A549 (cell line): ENCODE measurements at regions of chr9 and their contacts with region 1.

Region 1: DNA sequence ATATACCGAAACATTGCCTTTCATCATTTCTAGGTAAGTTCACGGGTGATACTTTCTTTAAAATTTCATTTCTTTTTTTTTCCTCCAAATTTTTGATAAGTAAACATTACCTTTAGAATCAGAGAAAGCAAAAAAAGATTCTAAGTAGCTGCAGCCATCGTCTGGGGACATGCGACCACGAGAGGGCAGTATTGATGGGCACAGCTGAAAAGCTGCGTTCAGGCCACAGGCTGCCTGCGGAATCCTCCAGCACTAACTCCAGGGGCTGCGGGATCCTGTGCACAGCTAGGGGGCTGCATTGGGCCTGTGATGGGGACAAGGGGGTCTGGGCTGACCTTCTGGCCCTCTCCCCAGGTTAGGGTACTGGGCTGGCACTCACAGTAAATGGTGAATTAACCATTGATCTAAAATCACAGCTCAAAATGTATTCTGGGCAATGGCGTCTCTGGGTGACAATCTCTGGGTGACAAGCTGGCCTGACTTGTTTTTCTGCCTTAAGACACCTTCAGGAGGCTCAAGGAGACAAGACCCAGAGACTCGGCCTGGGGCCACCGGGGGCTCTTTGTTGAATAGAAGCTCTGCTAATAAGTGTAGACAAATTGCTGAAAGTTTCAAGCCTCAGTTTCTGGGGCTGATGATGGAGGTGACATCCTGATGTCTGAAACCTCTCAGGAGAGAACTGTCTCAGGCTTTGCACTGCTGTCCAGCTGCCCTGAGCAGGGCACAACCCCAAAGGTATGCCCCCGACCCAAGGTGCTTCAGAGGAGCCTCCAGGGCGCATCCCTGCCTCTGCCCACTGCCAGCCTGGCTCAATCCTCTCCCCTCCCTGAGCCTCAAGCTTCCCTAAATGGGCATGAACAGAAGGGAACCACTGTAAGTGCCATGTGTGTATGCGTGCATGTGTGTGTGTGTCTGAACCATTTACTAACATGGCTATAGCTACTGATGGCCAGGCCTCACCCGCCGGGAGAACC is 44.3 kb upstream of the SARDH start:
- DNase-seq: peak; percentile 66 to 75
- ATAC-seq: peak; percentile 54 to 86; a peak in 5 of 6 replicates
- H3K4me3 ChIP-seq: no peak overlapping the region
- H3K27ac ChIP-seq: no peak overlapping the region
- H3K4me1 ChIP-seq: no peaks in the 10 kb centered on the region
- CTCF ChIP-seq: peak; percentile 83
- EP300 ChIP-seq: no peak
- POLR2A ChIP-seq: no peak
- RAD21 ChIP-seq: peak; percentile 66 to 70

Region 2: DNA sequence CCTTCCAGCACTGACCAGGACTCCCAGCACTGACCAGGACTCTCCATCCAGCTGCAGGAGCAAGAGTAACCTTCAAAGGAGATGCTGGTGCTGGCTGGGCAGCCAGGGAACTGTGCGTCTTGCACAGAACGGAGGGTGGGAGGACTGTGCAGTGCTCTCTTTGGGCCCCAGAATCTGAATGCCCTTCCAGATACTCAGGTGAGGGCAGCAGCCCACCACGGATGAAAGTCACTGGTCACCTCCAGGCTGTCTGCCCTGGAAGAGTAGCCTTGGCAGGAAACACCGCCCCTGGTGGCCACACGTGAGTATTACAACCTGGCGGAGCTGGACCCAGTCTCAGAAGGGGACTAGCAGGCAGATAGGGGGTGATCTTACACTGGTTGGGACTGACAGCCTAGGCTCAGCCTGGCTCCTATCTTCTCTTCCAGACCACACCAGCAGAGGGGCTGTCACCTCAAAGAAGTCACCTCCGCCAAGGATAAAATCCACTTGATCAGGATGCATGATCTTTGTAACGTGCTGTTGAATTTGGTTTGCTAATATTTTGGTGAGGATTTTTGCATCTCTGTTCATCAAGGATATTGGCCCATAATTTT is 39.5 kb before region 1 on chr9:
- CTCF ChIA-PET with region 1: interaction called, 26 read pairs
- POLR2A ChIA-PET with region 1: no interaction called
- DNase-seq: peak; percentile 78 to 95
- ATAC-seq: peak; percentile 86 to 96
- H3K4me3 ChIP-seq: no peak overlapping the region
- H3K27ac ChIP-seq: no peak overlapping the region
- H3K4me1 ChIP-seq: no peaks in the 10 kb centered on the region; the same call in 2 of the 3 replicates
- CTCF ChIP-seq: peak; percentile 86
- EP300 ChIP-seq: no peak
- POLR2A ChIP-seq: no peak
- RAD21 ChIP-seq: peak; percentile 41 to 59; a peak in 3 of 5 replicates

Region 3: DNA sequence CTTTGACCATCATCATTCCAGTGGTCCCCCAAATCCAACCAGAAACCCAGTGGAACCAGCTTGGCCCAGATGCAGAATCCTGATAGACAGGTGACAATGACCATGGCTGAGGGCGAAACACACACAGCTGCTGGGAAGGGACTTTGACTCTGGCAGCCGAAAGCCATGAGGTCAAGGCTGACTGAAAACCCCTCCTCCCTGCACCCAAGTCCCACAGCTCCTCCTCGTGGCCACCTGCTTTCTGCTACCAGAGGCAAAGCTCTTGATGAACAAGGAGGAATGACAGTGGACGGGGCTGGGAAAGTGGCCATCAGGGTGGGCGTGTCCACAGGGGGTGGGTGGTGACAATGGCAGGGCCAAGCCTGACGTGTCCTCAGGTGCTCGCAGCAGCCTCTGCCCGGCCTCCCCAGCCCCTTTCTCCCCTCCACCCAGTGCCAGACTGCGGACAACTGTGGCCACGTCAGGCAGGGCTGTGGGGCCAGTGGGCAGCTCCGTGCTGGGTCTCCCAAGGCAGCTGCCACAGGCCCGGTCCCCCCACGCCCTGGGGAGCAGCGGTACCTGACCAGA is 13.5 kb before region 1 on chr9:
- CTCF ChIA-PET with region 1: interaction called, 57 read pairs
- POLR2A ChIA-PET with region 1: no interaction called
- DNase-seq: peak in 1 of 2 experiments; percentile 25
- ATAC-seq: peak; percentile 21 to 45; a peak in 3 of 6 replicates
- H3K4me3 ChIP-seq: no peak overlapping the region
- H3K27ac ChIP-seq: no peak overlapping the region
- H3K4me1 ChIP-seq: no peaks in the 10 kb centered on the region
- CTCF ChIP-seq: no peak
- EP300 ChIP-seq: no peak
- POLR2A ChIP-seq: no peak
- RAD21 ChIP-seq: no peak

Region 4: GRCh38 chr9:133792721-133793470 is 10.5 kb after region 1 on chr9:
- CTCF ChIA-PET with region 1: interaction called, 112 read pairs
- POLR2A ChIA-PET with region 1: no interaction called
- DNase-seq: peak; percentile 70 to 81
- ATAC-seq: peak; percentile 80 to 92
- H3K4me3 ChIP-seq: no peak overlapping the region
- H3K27ac ChIP-seq: peak overlapping the region; percentile 63 to 81
- H3K4me1 ChIP-seq: peaks cover 9% of the 10 kb centered on the region
- CTCF ChIP-seq: peak; percentile 78
- EP300 ChIP-seq: no peak
- POLR2A ChIP-seq: no peak
- RAD21 ChIP-seq: peak; percentile 88 to 90

Region 5: DNA sequence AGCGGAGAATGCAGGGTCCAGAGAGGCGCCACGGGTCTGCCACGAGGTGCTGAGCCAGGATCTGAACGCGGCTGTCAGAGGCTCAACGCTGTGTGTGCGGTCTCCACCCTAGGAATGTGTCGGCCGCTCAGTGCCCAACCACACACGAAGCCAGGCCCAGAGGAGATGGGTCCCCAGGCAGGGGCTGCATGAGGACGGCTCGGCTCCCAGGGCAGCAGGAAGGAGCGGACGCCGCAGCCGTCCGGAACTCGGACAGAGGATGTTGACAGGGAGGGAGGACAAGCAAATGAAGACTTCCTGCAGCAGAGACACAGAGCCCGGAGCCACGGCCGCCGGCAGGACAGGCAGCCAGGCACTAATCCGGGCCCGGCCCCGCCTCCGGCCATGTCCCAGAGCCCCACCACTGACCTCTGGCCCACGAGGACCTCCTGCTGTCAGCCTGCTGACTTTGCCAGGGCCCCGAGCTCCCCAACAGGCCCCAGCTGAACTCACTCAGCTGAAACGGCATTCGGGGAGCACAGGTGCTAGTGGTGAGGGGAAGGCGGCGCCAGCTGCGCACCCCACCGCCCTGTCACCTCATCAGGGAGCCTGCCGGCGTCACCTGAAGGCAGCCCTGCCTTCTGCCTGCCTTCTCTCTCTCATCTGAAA is 197.0 kb after region 1 on chr9:
- CTCF ChIA-PET with region 1: interaction called, 14 read pairs
- POLR2A ChIA-PET with region 1: no interaction called
- DNase-seq: no peak
- ATAC-seq: no peak
- H3K4me3 ChIP-seq: no peak overlapping the region
- H3K27ac ChIP-seq: no peak overlapping the region
- H3K4me1 ChIP-seq: 0 out of 3 replicates have a peak, but pooled peaks cover 3% of the 10 kb centered on the region
- CTCF ChIP-seq: no peak
- EP300 ChIP-seq: no peak
- POLR2A ChIP-seq: no peak
- RAD21 ChIP-seq: no peak

Region 6: GRCh38 chr9:133999851-134000265 is 217.4 kb after region 1 on chr9:
- CTCF ChIA-PET with region 1: interaction called, 348 read pairs
- POLR2A ChIA-PET with region 1: interaction called, 9 read pairs
- DNase-seq: no peak
- ATAC-seq: no peak; a peak in 1 of 6 replicates
- H3K4me3 ChIP-seq: no peak overlapping the region
- H3K27ac ChIP-seq: no peak overlapping the region
- H3K4me1 ChIP-seq: peaks cover 5% of the 10 kb centered on the region
- CTCF ChIP-seq: no peak
- EP300 ChIP-seq: no peak
- POLR2A ChIP-seq: no peak
- RAD21 ChIP-seq: no peak

Region 7: DNA sequence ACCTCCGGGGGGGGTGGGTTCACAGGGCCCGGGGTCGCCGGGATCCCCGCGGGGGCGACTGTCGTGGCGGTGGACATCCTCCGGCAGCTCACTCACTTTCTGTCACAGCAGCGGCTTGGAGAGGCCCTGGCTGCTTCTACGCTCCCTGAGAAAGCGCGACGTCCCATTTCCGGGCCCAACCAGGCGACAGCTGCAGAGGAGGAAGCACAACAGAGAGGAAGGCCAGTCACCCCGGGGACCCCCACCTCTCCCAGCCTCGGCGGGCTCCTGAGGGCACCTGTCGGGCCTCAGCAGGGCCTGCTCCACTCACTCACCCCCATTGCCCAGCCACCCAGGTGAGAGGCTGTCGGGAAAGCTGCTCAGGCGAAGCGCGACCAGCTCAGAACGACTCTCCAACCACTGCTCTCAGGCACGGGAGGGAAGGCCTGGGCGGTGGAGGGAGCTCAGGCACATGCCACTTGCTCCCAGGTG is 271.0 kb after region 1 on chr9:
- CTCF ChIA-PET with region 1: no interaction called
- POLR2A ChIA-PET with region 1: no interaction called
- DNase-seq: no peak
- ATAC-seq: no peak
- H3K4me3 ChIP-seq: no peak overlapping the region
- H3K27ac ChIP-seq: no peak overlapping the region
- H3K4me1 ChIP-seq: peaks cover 26% of the 10 kb centered on the region
- CTCF ChIP-seq: no peak
- EP300 ChIP-seq: no peak
- POLR2A ChIP-seq: no peak
- RAD21 ChIP-seq: no peak

Region 8: DNA sequence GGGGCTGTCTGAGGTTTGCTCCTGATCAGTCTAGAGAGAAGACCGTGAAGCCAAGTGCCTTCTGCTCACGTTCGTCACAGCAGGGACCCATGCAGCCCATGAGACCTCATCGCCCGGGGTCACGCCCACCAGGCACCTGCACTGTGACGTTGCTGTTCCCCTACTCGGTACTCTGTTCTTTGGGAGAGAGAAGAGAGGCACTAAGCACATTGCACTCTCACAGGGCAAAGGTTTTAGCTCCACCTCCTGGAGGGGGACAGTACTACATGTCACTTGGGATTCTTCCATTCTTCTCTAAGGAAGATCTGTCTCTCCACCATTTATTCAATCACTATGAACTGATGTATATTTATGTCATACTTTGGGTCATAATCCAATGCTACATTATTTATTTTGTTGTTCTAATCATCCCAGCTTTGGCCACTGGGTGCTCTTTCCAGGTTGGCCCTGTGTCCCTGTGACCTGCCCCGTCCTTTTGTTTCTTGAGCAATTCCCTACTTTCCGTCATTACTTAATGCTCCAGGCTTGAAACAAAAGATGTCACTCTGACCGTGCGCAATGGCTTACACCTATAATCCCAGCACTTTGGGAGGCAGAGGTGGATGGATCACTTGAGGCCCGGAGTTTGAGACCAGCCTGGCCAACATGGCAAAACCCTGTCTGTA is 316.8 kb after region 1 on chr9:
- CTCF ChIA-PET with region 1: interaction called, 14 read pairs
- POLR2A ChIA-PET with region 1: no interaction called
- DNase-seq: peak; percentile 64 to 67
- ATAC-seq: peak; percentile 75 to 87
- H3K4me3 ChIP-seq: no peak overlapping the region
- H3K27ac ChIP-seq: no peak overlapping the region
- H3K4me1 ChIP-seq: no peaks in the 10 kb centered on the region
- CTCF ChIP-seq: peak; percentile 78
- EP300 ChIP-seq: no peak
- POLR2A ChIP-seq: no peak; the same call in 1 of the 2 replicates
- RAD21 ChIP-seq: peak; percentile 73 to 87

Region 9: DNA sequence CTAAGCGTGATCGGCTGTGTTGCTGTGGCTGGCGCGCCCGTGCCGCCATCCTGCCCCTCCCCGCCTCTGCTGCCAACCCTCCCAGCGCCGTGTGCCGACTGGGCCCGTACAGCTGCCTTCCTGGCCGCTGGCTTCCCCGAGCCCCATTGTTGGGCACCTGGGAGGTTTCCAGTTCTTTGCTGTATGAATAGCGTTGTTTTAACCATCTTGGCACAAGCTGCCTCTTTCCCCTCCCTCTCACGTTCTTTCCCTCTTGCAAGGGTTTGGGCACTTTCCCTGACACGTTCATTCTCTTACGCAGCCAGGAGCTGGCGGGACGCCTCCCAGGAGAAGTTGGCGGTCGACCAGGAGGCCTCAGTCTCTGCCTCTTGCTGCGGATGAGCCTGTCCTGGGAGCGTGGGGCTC is 500.7 kb after region 1 on chr9:
- CTCF ChIA-PET with region 1: no interaction called
- POLR2A ChIA-PET with region 1: no interaction called
- DNase-seq: no peak
- ATAC-seq: no peak
- H3K4me3 ChIP-seq: no peak overlapping the region
- H3K27ac ChIP-seq: no peak overlapping the region
- H3K4me1 ChIP-seq: no peaks in the 10 kb centered on the region
- CTCF ChIP-seq: no peak
- EP300 ChIP-seq: no peak
- POLR2A ChIP-seq: no peak
- RAD21 ChIP-seq: no peak